Astrocyte of the cerebellum (primary cell): ENCODE measurements at regions of chr9 and their contacts with region 1.

Region 1: DNA sequence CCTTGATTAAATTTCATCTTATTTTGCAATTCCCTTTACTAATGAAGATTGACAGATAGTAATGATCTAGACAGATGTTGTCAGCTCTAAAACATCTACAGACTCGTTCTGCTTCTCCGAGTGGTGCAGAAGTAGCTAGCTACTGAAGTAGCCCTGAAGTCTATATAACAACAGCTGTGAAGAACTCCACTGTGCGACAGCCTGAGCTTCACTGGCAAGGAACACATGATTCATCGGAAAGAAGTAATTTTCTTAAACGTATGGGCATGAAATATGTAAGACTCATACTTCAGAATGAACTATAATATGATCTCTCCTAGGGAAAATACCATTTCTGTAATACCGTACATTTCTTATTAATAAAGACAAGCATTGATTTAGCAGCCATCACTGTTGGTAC is 96.2 kb downstream of the TRPM3 start:
- DNase-seq: no peak
- H3K4me3 ChIP-seq: no peak overlapping the region
- CTCF ChIP-seq: no peak

Region 2: DNA sequence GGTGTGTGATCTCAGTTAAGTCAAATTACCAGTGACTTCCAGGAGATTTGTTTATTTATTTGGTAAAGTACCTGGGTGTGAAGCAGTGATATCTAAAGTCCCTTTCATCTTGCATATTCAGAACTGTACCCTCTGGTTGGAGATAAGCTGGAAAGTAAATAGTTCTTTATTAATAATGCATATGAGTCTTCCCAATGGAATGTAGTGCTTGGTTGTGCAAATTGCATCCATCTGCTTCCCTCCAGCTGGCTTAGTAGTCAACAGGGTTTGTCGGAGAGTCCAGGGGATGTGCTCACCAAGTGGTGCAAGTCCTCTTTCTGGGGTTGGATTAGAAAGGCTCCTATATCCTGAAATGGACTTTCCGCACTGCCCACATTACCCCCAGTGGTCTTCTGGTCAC is 54.2 kb after region 1 on chr9:
- in situ Hi-C with region 1: loop called (anchors 5 kb)
- DNase-seq: no peak
- H3K4me3 ChIP-seq: no peak overlapping the region
- CTCF ChIP-seq: no peak